ENCODE measurements at regions of chr1 and their contacts with region 1.

Region 1: GRCh38 chr1:46581681-46582455 is 22.2 kb downstream of the MKNK1 start:
- DNase-seq: peak; percentile 64 to 85 (median 68)
- H3K4me3 ChIP-seq: peak overlapping the region in 1 of 3 experiments; percentile 42
- H3K4me3 Mint-ChIP-seq: peak overlapping the region in 1 of 2 donors; percentile 44
- H3K27ac ChIP-seq: peak overlapping the region; percentile 50 to 86
- H3K27ac Mint-ChIP-seq: peak overlapping the region; percentile 81 to 99 (median 97)
- H3K4me1 ChIP-seq: peaks cover 72 to 77% of the 10 kb centered on the region in 2 donors
- H3K4me1 Mint-ChIP-seq: peaks cover 81% of the 10 kb centered on the region
- H3K27me3 ChIP-seq: no peaks in the 10 kb centered on the region
- H3K27me3 Mint-ChIP-seq: peaks cover 0 to 3% (median under 1%) of the 10 kb centered on the region in 3 donors
- CTCF ChIP-seq: no peak

Region 2: GRCh38 chr1:46594063-46594462 is 12.2 kb after region 1 on chr1:
- intact Hi-C with region 1: loop called in 1 of 2 experiments (anchors 1 kb)
- DNase-seq: peak; percentile 30 to 56 (median 53)
- H3K4me3 ChIP-seq: peak overlapping the region in 1 of 3 experiments; percentile 53
- H3K4me3 Mint-ChIP-seq: peak overlapping the region in 1 of 2 donors; percentile 66
- H3K27ac ChIP-seq: peak overlapping the region; percentile 82 to 92
- H3K27ac Mint-ChIP-seq: peak overlapping the region; percentile 86 to 98 (median 95)
- H3K4me1 ChIP-seq: peaks cover 43 to 50% of the 10 kb centered on the region in 2 donors
- H3K4me1 Mint-ChIP-seq: peaks cover 63% of the 10 kb centered on the region
- H3K27me3 ChIP-seq: no peaks in the 10 kb centered on the region
- H3K27me3 Mint-ChIP-seq: peaks cover 0 to 3% (median 0%) of the 10 kb centered on the region in 3 donors
- CTCF ChIP-seq: no peak

Region 3: DNA sequence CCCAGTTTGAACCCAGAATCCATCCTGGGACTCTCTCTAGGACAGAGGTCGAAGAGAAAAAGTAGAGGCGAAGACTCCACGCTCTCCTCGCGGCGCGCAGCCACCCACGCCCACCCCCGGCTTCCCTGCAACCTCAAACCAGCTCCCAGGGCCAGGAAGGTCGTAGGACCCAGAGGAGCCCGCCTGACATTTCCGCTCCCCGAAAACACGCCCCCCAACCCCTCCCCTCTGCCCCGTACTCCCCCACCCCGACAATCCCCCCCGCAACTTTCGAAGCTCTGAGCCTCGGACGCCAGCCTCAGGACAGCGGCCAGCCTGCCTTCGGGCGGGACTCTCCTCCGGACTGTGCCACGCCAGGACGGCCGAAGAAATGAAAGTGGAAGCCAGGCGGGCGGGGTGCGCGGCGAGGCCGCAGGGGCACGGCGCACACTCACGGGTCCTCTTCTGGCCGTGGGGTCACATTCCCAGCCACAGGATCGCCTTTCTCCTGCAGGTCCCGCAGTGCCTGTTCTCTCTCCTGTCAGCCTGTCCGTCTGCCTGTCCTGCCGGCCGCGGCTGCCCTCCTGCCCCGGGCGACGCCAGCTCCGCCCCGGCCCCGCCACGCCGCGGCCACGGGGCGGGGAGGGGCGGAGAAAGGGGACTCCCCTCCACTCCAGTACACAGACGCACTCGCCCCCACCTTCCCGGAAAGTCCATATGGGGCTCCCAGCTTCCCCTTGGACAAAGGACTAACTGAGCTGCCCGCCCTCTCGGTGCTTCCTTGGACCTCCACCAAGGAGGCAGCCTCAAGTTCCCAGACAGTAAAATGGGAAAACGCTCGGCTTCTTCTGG is 34.6 kb after region 1 on chr1 and contains the start of gene MOB3C:
- intact Hi-C with region 1: loop called in 1 of 2 experiments (anchors 5 kb)
- DNase-seq: peak; percentile 28 to 72 (median 35)
- H3K4me3 ChIP-seq: peak within 1 kb of the TSS; percentile 76 to 86 (median 82)
- H3K4me3 Mint-ChIP-seq: peak within 1 kb of the TSS; percentile 94
- H3K27ac ChIP-seq: peak within 1 kb of the TSS; percentile 54 to 80
- H3K27ac Mint-ChIP-seq: peak within 1 kb of the TSS; percentile 80 to 94 (median 88)
- H3K4me1 ChIP-seq: peaks cover 51 to 61% of the 10 kb centered on the region in 2 donors
- H3K4me1 Mint-ChIP-seq: peaks cover 65% of the 10 kb centered on the region
- H3K27me3 ChIP-seq: no peaks in the 10 kb centered on the region
- H3K27me3 Mint-ChIP-seq: peaks cover 0 to 7% (median 3%) of the 10 kb centered on the region in 3 donors
- CTCF ChIP-seq: no peak
- polyA plus RNA-seq, gene MOB3C: 5.3 to 18.1 (median 6.1) TPM

Region 4: GRCh38 chr1:46675549-46676314 is 93.9 kb after region 1 on chr1:
- intact Hi-C with region 1: no loop called
- DNase-seq: no peak
- H3K4me3 ChIP-seq: no peak overlapping the region
- H3K4me3 Mint-ChIP-seq: no peak overlapping the region
- H3K27ac ChIP-seq: no peak overlapping the region
- H3K27ac Mint-ChIP-seq: peak overlapping the region in 2 of 7 donors; percentile 69 to 82
- H3K4me1 ChIP-seq: no peaks in the 10 kb centered on the region
- H3K4me1 Mint-ChIP-seq: no peaks in the 10 kb centered on the region
- H3K27me3 ChIP-seq: no peaks in the 10 kb centered on the region
- H3K27me3 Mint-ChIP-seq: no peaks in the 10 kb centered on the region
- CTCF ChIP-seq: no peak

Measured in CD14-positive monocyte (primary cell).